Ovary (tissue), 10 donors: ENCODE measurements at regions of chr9 and their contacts with region 1.

Region 1: GRCh38 chr9:134178768-134179551 is 14.6 kb upstream of the RNU6ATAC start:
- DNase-seq: peak; percentile 80 to 91 (median 83)
- H3K4me3 ChIP-seq: no peak overlapping the region
- H3K27ac ChIP-seq: peak overlapping the region in 1 of 2 donors; percentile 69
- H3K4me1 ChIP-seq: peaks cover 20% of the 10 kb centered on the region
- H3K27me3 ChIP-seq: no peaks in the 10 kb centered on the region
- CTCF ChIP-seq: no peak
- EP300 ChIP-seq: no peak
- POLR2A ChIP-seq: no peak

Region 2: DNA sequence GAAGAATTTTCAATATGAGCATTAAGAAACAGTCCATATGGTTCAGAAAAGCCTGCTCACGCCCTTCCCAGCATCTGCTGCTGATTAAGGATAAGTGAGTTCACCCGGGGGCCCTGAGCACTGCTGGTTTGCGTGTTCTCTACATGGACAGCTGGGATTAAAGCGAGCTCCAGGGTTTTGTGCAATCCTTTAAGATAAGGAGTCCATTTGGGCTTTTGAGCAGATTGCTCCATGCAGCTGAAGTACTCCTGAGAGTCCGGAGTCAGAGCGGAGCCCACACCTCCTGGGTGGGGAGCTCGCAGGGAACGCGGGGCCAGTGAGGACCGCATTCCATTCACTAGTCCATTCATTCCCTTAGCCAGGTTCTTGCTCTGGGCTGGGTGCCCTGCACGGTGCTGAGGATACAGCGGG is 313.3 kb after region 1 on chr9:
- intact Hi-C with region 1: no loop called
- DNase-seq: peak in 3 of 5 donors; percentile 65 to 78 (median 67)
- H3K4me3 ChIP-seq: no peak overlapping the region
- H3K27ac ChIP-seq: peak overlapping the region in 1 of 2 donors; percentile 8
- H3K4me1 ChIP-seq: peaks cover 4% of the 10 kb centered on the region
- H3K27me3 ChIP-seq: no peaks in the 10 kb centered on the region
- CTCF ChIP-seq: no peak
- EP300 ChIP-seq: no peak
- POLR2A ChIP-seq: no peak

Region 3: DNA sequence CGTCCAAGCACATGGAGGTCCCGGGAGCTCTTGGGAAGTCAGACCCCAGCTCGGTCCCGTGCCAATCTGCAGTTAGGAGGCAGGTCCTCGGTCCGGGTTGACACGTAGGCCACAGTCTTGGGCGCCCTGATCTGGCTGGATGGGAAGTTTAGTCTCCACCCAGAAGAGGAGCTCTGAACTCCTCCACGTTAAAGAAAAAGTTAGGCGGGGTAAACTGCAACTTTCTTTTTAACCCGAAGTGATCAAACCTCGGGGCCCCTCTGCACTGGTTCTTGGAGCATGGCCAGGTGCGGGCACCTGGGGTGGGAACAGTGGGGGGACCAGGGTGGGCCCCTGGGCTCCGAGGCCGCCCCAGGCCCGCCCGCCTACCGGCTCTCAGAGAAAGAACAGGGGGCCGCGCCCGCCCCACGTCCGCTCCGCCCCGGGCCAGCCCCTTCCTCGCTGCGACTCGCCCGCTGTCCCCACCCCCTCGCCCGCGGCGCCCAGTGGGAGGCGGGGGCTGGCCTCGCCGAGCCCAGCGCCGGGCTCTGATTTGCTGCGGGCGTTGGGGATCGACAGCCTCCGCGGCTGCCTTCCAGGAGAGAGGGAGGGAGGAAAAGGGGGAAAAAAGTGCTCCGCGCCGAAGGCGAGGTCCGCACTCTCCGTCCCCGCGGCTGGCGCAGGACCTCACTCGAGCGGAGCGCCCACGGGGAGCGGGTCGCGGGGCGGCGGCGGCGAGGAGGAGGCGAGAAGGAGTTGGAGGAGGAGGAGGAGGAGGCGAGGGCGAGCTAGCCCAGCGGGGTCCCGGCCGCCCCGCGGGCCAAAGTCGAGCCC is 462.4 kb after region 1 on chr9 and contains the start of gene COL5A1:
- intact Hi-C with region 1: loop called in 2 of 4 experiments (anchors 10 kb)
- DNase-seq: peak; percentile 92 to 94 (median 93)
- H3K4me3 ChIP-seq: peak within 1 kb of the TSS; percentile 86
- H3K27ac ChIP-seq: peak within 1 kb of the TSS; percentile 64 to 83
- H3K4me1 ChIP-seq: peaks cover 13% of the 10 kb centered on the region
- H3K27me3 ChIP-seq: no peaks in the 10 kb centered on the region
- CTCF ChIP-seq: peak in 2 of 3 donors; percentile 50 to 54
- EP300 ChIP-seq: no peak
- POLR2A ChIP-seq: peak; percentile 85
- total RNA-seq, gene COL5A1: 28.1 to 117 (median 58.6) TPM